Mucosa of descending colon (tissue), 3 donors: ENCODE measurements at regions of chr2 and their contacts with region 1.

Region 1: GRCh38 chr2:37786854-37787253 is 115.4 kb upstream of the CDC42EP3 start:
- DNase-seq: peak; percentile 63 to 65 (median 65)
- ATAC-seq: peak; percentile 87
- H3K4me3 ChIP-seq: no peak overlapping the region
- H3K4me1 ChIP-seq: peaks cover 15% of the 10 kb centered on the region
- CTCF ChIP-seq: no peak

Region 2: GRCh38 chr2:37672104-37672869 is 114.6 kb before region 1 on chr2:
- intact Hi-C with region 1: loop called in 1 of 2 experiments (anchors 10 kb)
- DNase-seq: peak; percentile 83 to 88 (median 84)
- ATAC-seq: peak; percentile 73
- H3K4me3 ChIP-seq: peak overlapping the region; percentile 72
- H3K4me1 ChIP-seq: peaks cover 3% of the 10 kb centered on the region
- CTCF ChIP-seq: no peak

Region 3: GRCh38 chr2:38190542-38191218 is 403.8 kb after region 1 on chr2:
- intact Hi-C with region 1: no loop called
- DNase-seq: no peak
- ATAC-seq: no peak
- H3K4me3 ChIP-seq: no peak overlapping the region
- H3K4me1 ChIP-seq: no peaks in the 10 kb centered on the region
- CTCF ChIP-seq: no peak

Region 4: GRCh38 chr2:38323623-38324022 is 536.8 kb after region 1 on chr2:
- intact Hi-C with region 1: no loop called
- DNase-seq: no peak
- ATAC-seq: no peak
- H3K4me3 ChIP-seq: no peak overlapping the region
- H3K4me1 ChIP-seq: no peaks in the 10 kb centered on the region
- CTCF ChIP-seq: no peak